Sigmoid colon (tissue), 7 donors: ENCODE measurements at regions of chr7 and their contacts with region 1.

Region 1: GRCh38 chr7:143214789-143215679 is 6.8 kb upstream of the TAS2R40 start:
- DNase-seq: peak; percentile 71
- H3K4me3 ChIP-seq: no peak overlapping the region
- H3K27ac ChIP-seq: peak overlapping the region in 2 of 4 donors; percentile 31 to 35
- H3K4me1 ChIP-seq: peaks cover 0 to 8% (median 3%) of the 10 kb centered on the region in 4 donors
- H3K27me3 ChIP-seq: no peaks in the 10 kb centered on the region
- CTCF ChIP-seq: peak; percentile 91 to 99 (median 97)
- EP300 ChIP-seq: no peak
- POLR2A ChIP-seq: no peak

Region 2: DNA sequence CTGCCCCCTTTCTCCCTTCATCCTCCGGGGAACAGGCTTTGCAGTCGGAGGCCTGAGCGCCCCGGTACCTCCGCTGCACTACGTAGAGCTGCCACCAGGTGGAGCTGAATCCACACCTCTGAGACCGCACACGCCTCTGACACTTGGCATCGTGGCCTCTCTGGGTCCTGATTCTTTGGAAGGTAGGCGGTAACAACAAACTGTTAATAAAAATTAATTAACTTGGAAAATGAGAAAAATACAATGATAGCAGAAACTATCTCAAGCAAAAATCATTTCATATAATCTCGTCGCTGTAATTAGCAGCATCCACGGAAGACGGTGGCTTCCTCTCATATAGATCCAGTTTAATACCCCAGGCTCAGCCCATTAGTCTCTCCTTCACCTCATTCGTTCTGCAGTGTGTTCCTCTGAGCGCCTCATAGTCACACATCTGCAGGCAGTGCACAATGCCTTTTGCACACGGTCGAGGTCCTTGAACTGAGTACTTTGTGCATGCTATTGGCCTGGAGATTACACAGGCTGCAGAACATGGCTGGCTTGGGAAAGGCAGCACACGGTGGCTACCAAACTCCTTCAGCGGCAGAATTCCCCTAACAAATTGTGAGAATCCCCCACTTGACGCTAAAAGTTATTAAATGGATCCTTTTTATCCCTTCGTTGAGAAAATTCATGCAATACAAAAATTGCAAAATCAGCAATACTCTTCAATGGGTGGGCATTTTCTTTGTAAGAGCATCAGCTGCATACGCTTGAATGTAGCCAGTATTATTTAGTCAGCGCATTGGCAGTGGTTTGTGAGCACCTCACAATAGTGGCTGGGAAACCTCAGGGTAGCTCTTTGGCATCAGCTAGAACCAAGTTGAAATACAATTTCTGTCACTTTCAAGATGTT is 206.8 kb before region 1 on chr7:
- intact Hi-C with region 1: loop called (anchors 1 kb)
- DNase-seq: peak; percentile 80
- H3K4me3 ChIP-seq: no peak overlapping the region
- H3K27ac ChIP-seq: no peak overlapping the region
- H3K4me1 ChIP-seq: peaks cover 0 to 5% (median 3%) of the 10 kb centered on the region in 4 donors
- H3K27me3 ChIP-seq: no peaks in the 10 kb centered on the region
- CTCF ChIP-seq: peak; percentile 89 to 92 (median 92)
- EP300 ChIP-seq: no peak
- POLR2A ChIP-seq: no peak